ENCODE measurements at regions of chr2 and their contacts with region 1.

Region 1: DNA sequence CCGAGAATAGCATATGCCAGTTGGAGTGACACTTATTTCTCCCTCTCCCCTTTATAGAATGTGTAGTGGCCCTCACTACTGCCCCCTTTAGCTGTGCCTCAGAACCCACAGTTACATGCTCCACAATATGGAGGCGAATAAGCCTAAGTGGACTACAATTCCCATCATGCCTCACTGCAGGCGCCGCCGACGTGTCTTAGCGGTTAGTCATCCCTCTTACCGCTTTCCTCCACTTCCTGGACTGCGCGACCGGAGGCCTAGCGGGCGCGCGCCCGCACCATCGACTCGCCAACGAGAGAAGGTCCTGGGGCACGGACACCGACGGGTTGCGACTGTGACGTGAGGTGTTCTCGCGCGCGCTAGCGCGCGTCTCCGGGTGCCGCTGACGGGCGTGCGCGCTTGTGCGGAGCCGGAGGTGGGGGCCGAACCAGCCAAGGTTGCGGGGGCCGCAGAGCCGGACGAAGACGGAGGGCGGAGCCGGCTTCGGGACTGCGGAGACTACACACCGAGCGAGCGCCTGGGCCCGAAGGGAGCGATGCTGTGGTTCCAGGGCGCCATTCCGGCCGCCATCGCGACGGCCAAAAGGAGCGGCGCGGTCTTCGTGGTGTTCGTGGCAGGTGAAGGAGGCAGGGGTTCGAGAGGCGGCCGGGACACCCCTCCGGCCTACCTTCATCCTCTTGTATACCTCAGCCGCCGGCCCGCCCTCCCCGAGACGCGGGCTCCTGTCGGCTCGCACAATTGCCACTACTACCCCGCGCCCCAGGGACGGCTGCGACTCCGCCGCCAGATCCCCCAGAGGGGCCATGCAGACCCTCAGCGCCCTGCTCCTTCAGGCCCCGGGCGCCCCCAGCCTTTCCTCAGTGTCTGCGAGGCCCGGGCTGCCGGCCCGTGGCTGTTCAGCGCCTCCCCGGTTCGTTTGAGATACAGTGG is at the start of gene UBXN4:
- DNase-seq: peak; percentile 88 to 97 (median 91)
- H3K4me3 ChIP-seq: peak within 1 kb of the TSS; percentile 53 to 80
- H3K4me3 Mint-ChIP-seq: peak within 1 kb of the TSS; percentile 94 to 99 (median 97)
- H3K27ac ChIP-seq: peak within 1 kb of the TSS; percentile 97
- H3K27ac Mint-ChIP-seq: peak within 1 kb of the TSS in 6 of 7 donors; percentile 96 to 99 (median 97)
- H3K4me1 ChIP-seq: peaks cover 40% of the 10 kb centered on the region
- H3K4me1 Mint-ChIP-seq: peaks cover 29 to 43% (median 37%) of the 10 kb centered on the region in 4 donors
- H3K27me3 ChIP-seq: no peaks in the 10 kb centered on the region
- H3K27me3 Mint-ChIP-seq: no peaks in the 10 kb centered on the region
- total RNA-seq, gene UBXN4: 116 to 121 TPM

Region 2: GRCh38 chr2:135876066-135876711 is 134.5 kb after region 1 on chr2 and contains the start of gene MCM6:
- CTCF ChIA-PET with region 1: interaction called, 3 read pairs
- POLR2A ChIA-PET with region 1: interaction called, 7 read pairs
- intact Hi-C with region 1: loop called (anchors 1 kb)
- DNase-seq: peak; percentile 97 to 98 (median 98)
- H3K4me3 ChIP-seq: peak within 1 kb of the TSS; percentile 82 to 84
- H3K4me3 Mint-ChIP-seq: peak within 1 kb of the TSS; percentile 81 to 96 (median 95)
- H3K27ac ChIP-seq: peak within 1 kb of the TSS; percentile 80
- H3K27ac Mint-ChIP-seq: peak within 1 kb of the TSS; percentile 94 to 97 (median 95)
- H3K4me1 ChIP-seq: peaks cover 31% of the 10 kb centered on the region
- H3K4me1 Mint-ChIP-seq: peaks cover 27 to 47% (median 37%) of the 10 kb centered on the region in 4 donors
- H3K27me3 ChIP-seq: no peaks in the 10 kb centered on the region
- H3K27me3 Mint-ChIP-seq: peaks cover 0 to 1% of the 10 kb centered on the region in 2 donors
- total RNA-seq, gene MCM6: 31.2 to 32.7 TPM

Region 3: DNA sequence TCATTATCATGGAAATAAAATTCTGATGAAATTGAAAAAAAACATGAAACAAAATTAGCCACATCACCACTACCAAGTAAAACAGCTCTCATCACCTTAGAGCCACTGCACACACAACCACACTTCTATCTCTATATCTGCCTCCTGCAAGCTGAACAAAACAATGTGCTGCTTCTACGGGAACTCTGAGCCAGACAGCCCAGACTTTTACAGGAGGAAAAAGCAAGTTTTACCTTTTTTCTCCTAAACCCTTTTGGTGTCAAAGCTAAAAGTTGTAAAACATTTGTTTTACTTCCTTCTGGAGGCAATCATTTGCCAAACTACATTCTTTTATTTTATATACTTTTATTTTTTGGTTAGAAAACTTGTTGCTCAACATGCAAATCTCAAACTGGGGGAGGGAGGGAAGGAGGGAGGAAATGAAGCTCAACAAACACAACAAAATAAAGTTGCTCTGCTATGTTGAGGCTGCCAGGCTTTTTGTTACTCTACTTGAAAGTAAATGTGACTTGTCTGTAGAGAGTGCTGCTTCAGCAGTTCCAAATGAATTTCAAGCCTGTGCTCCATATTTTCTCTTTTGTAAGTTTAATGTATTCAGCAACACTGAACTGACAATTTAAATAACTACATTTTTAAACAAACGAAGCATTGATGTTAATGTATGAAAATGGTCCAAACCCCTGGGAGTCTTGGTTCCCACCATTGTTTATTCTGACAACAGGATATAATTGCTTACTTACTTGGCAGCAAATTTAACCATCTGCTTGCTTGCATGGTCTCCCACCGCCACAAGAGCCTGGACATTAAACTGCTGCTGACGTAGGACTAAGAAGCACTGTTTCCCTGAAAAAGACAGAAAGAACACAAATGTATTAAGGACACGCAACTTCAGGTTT is 219.2 kb after region 1 on chr2:
- CTCF ChIA-PET with region 1: no interaction called
- POLR2A ChIA-PET with region 1: no interaction called
- intact Hi-C with region 1: no loop called
- DNase-seq: peak; percentile 38 to 55 (median 43)
- H3K4me3 ChIP-seq: peak overlapping the region in 1 of 2 donors; percentile 6
- H3K4me3 Mint-ChIP-seq: peak overlapping the region; percentile 9 to 79 (median 53)
- H3K27ac ChIP-seq: peak overlapping the region; percentile 60
- H3K27ac Mint-ChIP-seq: peak overlapping the region; percentile 76 to 96 (median 89)
- H3K4me1 ChIP-seq: peaks cover 49% of the 10 kb centered on the region
- H3K4me1 Mint-ChIP-seq: peaks cover 44 to 70% (median 55%) of the 10 kb centered on the region in 4 donors
- H3K27me3 ChIP-seq: no peaks in the 10 kb centered on the region
- H3K27me3 Mint-ChIP-seq: no peaks in the 10 kb centered on the region